ENCODE measurements at regions of chr5 and their contacts with region 1.

Region 1: DNA sequence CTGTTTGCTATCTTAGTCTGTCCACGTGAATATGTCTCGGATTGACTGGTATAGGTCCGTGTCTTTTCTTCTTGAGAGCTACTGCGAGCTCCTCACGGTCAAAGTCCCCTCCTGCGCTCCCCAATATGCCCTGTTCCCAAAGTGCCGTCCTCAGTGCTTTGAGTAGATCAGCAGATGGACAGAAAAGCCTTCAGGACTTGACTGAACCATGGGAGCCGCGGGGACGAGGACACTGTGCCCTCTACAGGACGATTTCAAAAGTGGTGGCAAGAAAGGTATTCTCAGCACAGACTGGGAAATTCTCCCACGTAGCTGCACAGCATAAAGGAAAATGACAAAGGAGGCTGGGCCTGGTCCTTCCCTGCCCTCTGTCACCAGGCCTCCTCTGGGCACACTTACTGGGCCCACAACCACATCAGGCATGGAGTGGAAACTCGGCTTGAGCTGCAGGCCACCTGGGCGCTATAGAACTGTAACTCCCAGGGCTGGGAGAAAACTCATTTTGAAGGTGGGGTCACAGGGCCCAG is 16.6 kb upstream of the MTMR12 start:
- DNase-seq: peak; percentile 83
- H3K4me3 ChIP-seq: no peak overlapping the region
- H3K27ac ChIP-seq: no peak overlapping the region
- H3K4me1 ChIP-seq: peaks cover 4% of the 10 kb centered on the region
- H3K27me3 ChIP-seq: no peaks in the 10 kb centered on the region
- CTCF ChIP-seq: peak; percentile 59

Region 2: GRCh38 chr5:32115985-32116384 is 213.4 kb before region 1 on chr5:
- intact Hi-C with region 1: loop called (anchors 10 kb)
- DNase-seq: no peak
- H3K4me3 ChIP-seq: no peak overlapping the region
- H3K27ac ChIP-seq: no peak overlapping the region
- H3K4me1 ChIP-seq: no peaks in the 10 kb centered on the region
- H3K27me3 ChIP-seq: no peaks in the 10 kb centered on the region
- CTCF ChIP-seq: no peak

Measured in colonic mucosa (tissue), 4 donors.